ENCODE measurements at regions of chr3 and their contacts with region 1.

Region 1: GRCh38 chr3:149224736-149225594 is 3.3 kb upstream of the CP start:
- DNase-seq: peak; percentile 32
- H3K4me3 Mint-ChIP-seq: peak overlapping the region; percentile 81
- H3K27ac Mint-ChIP-seq: peak overlapping the region; percentile 83
- H3K4me1 Mint-ChIP-seq: peaks cover 29% of the 10 kb centered on the region
- H3K27me3 Mint-ChIP-seq: no peaks in the 10 kb centered on the region

Region 2: GRCh38 chr3:149152420-149152819 is 72.5 kb before region 1 on chr3:
- intact Hi-C with region 1: loop called (anchors 2 kb)
- DNase-seq: no peak
- H3K4me3 Mint-ChIP-seq: no peak overlapping the region
- H3K27ac Mint-ChIP-seq: no peak overlapping the region
- H3K4me1 Mint-ChIP-seq: peaks cover 18% of the 10 kb centered on the region
- H3K27me3 Mint-ChIP-seq: no peaks in the 10 kb centered on the region

Region 3: DNA sequence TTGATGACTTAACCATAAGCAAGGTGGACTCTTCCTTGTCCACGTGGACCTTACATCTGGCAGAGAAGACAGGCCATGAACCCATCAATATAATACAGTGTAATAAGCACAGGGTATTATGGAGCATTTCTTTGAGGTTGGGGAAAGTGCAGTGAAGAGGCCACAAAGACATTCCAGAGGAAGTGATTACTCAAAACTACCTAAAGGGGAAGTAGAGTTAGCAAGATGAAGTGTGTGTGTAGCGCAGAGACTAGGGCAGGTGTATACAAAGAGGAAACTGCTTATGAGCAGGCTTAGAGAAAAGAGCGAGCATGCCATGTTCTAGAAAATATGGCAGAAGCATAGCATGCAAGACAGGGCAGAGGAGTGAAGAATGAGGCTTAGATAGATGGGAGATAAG is 21.2 kb before region 1 on chr3:
- intact Hi-C with region 1: loop called (anchors 1 kb)
- DNase-seq: no peak
- H3K4me3 Mint-ChIP-seq: no peak overlapping the region
- H3K27ac Mint-ChIP-seq: no peak overlapping the region
- H3K4me1 Mint-ChIP-seq: peaks cover 18% of the 10 kb centered on the region
- H3K27me3 Mint-ChIP-seq: peaks cover 41% of the 10 kb centered on the region

Region 4: GRCh38 chr3:149245738-149246451 is 20.9 kb after region 1 on chr3:
- intact Hi-C with region 1: loop called (anchors 1 kb)
- DNase-seq: no peak
- H3K4me3 Mint-ChIP-seq: no peak overlapping the region
- H3K27ac Mint-ChIP-seq: peak overlapping the region; percentile 21
- H3K4me1 Mint-ChIP-seq: peaks cover 39% of the 10 kb centered on the region
- H3K27me3 Mint-ChIP-seq: peaks cover 7% of the 10 kb centered on the region

Region 5: GRCh38 chr3:149273096-149273751 is 48.3 kb after region 1 on chr3:
- intact Hi-C with region 1: loop called (anchors 2 kb)
- DNase-seq: no peak
- H3K4me3 Mint-ChIP-seq: no peak overlapping the region
- H3K27ac Mint-ChIP-seq: no peak overlapping the region
- H3K4me1 Mint-ChIP-seq: peaks cover 20% of the 10 kb centered on the region
- H3K27me3 Mint-ChIP-seq: peaks cover 15% of the 10 kb centered on the region